ENCODE measurements at regions of chr20 and their contacts with region 1.

Region 1: GRCh38 chr20:59165891-59166709 is 2.5 kb downstream of the ZNF831 start:
- DNase-seq: no peak
- H3K4me3 Mint-ChIP-seq: peak overlapping the region; percentile 79
- H3K27ac Mint-ChIP-seq: peak overlapping the region; percentile 87
- H3K4me1 Mint-ChIP-seq: peaks cover 70% of the 10 kb centered on the region
- H3K27me3 Mint-ChIP-seq: no peaks in the 10 kb centered on the region

Region 2: GRCh38 chr20:58755766-58756449 is 410.2 kb before region 1 on chr20:
- intact Hi-C with region 1: no loop called
- DNase-seq: no peak
- H3K4me3 Mint-ChIP-seq: no peak overlapping the region
- H3K27ac Mint-ChIP-seq: no peak overlapping the region
- H3K4me1 Mint-ChIP-seq: no peaks in the 10 kb centered on the region
- H3K27me3 Mint-ChIP-seq: peaks cover 7% of the 10 kb centered on the region

Region 3: DNA sequence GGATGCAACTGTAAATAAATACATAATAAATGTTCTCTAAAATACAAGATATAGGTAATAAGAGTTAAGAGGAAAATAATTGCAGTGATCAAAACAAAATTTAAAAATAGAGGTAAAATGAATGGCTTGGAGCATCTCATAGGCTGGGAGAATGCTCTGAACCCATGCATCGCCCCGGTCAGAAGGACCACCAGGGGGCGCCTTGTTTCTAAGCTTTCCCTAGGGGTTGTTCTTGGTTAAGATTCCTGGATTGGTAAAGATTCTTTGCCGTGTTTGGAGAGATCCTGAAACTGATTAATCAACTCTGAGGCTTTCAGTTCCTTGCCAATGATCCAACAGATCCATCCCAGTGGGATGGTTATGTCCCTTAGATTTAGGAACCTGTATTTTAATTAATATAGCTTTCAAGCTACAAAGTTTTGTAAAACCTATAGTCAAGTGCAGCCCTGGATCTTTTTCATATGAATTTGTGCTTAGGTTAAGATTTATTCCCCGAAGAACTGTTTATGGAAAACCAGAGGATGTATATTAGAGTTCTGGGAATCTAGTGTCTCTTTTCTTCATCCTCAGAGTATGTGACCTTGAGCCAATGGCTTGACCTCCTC is 78.2 kb before region 1 on chr20:
- intact Hi-C with region 1: loop called (anchors 5 kb)
- DNase-seq: peak; percentile 67
- H3K4me3 Mint-ChIP-seq: no peak overlapping the region
- H3K27ac Mint-ChIP-seq: no peak overlapping the region
- H3K4me1 Mint-ChIP-seq: peaks cover 1% of the 10 kb centered on the region
- H3K27me3 Mint-ChIP-seq: peaks cover 35% of the 10 kb centered on the region

Region 4: GRCh38 chr20:59120491-59120890 is 45.6 kb before region 1 on chr20:
- intact Hi-C with region 1: loop called (anchors 1 kb)
- DNase-seq: no peak
- H3K4me3 Mint-ChIP-seq: no peak overlapping the region
- H3K27ac Mint-ChIP-seq: peak overlapping the region; percentile 2
- H3K4me1 Mint-ChIP-seq: peaks cover 50% of the 10 kb centered on the region
- H3K27me3 Mint-ChIP-seq: peaks cover 4% of the 10 kb centered on the region

Region 5: GRCh38 chr20:59149651-59150504 is 16.2 kb before region 1 on chr20:
- intact Hi-C with region 1: loop called (anchors 1 kb)
- DNase-seq: peak; percentile 80
- H3K4me3 Mint-ChIP-seq: no peak overlapping the region
- H3K27ac Mint-ChIP-seq: peak overlapping the region; percentile 78
- H3K4me1 Mint-ChIP-seq: peaks cover 87% of the 10 kb centered on the region
- H3K27me3 Mint-ChIP-seq: no peaks in the 10 kb centered on the region

Region 6: DNA sequence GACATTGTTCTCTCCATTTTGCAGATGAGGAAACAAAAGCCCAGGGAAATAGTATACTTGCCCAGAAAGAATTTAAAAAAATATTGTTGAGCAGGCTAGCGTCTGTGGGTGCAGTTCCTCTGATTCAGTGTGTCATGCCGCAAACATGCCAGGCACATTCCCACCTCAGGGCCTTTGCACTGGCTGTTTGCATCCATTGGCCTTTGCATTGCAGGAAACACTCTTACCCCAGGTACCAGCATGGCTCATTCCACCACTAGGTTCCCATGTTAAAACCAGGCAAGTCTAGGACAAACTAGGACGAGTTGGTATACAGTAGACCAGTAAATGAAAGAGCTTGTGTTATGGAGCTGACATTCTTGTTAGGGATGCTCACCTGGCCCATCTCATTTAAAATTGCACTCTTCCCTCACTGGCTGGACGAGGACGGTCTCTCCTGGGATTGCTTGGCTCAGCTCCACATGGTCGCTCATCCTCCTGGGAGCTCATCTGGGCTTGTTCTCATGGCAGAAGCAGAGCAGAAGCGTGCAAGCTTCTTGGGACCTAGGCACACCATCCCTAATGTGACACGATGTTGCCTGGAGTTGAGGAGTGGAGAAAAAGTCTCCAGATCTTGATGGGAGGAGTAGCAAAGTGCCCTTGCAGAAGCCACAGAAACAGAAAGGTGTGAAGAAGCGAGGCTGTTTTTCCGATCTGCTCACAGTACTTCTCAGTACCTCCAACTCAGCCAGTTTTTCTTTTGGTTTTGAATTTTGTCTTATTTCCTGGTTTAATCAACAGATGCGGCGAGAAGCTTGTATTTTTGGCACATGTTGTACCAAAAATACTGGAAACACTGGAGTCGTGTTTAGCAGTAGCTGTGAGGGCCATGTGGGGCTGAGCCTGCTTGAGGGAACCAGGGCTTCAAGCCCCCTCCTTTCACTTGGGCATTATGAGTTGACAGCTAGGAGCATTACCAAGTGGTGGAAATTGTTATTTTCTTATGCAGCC is 11.5 kb after region 1 on chr20:
- intact Hi-C with region 1: loop called (anchors 1 kb)
- DNase-seq: no peak
- H3K4me3 Mint-ChIP-seq: peak overlapping the region; percentile 20
- H3K27ac Mint-ChIP-seq: peak overlapping the region; percentile 86
- H3K4me1 Mint-ChIP-seq: peaks cover 39% of the 10 kb centered on the region
- H3K27me3 Mint-ChIP-seq: no peaks in the 10 kb centered on the region

Region 7: DNA sequence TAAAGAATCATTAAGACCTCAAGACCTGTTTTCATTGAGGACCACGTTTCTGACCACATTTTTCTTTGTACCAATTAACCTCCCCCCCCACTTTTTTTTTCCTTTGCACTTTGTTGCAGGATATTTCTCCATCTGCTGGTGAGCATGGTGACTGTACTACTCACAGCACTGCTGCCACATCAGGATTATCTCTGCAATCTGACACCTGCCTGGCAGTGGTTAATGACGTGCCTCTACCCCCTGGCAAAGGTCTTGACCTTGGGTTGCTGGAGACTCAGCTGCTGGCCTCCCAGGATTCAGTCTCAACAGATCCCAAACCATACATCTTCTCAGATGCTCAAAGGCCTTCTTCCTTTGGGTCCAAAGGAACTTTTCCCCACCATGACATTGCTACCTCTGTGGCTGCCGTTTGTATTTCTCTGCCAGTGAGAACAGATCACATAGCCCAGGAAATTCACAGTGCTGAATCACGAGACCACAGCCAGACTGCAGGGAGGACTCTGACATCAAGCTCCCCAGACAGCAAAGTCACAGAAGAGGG is 87.7 kb after region 1 on chr20:
- intact Hi-C with region 1: loop called (anchors 5 kb)
- DNase-seq: peak; percentile 14
- H3K4me3 Mint-ChIP-seq: peak overlapping the region; percentile 20
- H3K27ac Mint-ChIP-seq: peak overlapping the region; percentile 74
- H3K4me1 Mint-ChIP-seq: peaks cover 46% of the 10 kb centered on the region
- H3K27me3 Mint-ChIP-seq: peaks cover 1% of the 10 kb centered on the region

Measured in activated T-helper 2 cell treated with anti-CD3 and anti-CD28 coated beads, Interferon-gamma antibody, Interleukin-2, Interleukin-4, amounts not matched to agents 10 μg/mL and 5 μg/mL and 100 μg/mL, durations not matched to agents 14 hours and 24 hours and 36 hours (primary cell).